ENCODE measurements at regions of chr16 and their contacts with region 1.

Region 1: GRCh38 chr16:78761427-78761826 is 662.0 kb downstream of the WWOX start:
- DNase-seq: no peak
- H3K4me3 ChIP-seq: no peak overlapping the region
- H3K27ac ChIP-seq: no peak overlapping the region
- H3K4me1 ChIP-seq: peaks cover 0 to 8% (median 4%) of the 10 kb centered on the region in 4 donors
- H3K27me3 ChIP-seq: no peaks in the 10 kb centered on the region
- CTCF ChIP-seq: no peak

Region 2: DNA sequence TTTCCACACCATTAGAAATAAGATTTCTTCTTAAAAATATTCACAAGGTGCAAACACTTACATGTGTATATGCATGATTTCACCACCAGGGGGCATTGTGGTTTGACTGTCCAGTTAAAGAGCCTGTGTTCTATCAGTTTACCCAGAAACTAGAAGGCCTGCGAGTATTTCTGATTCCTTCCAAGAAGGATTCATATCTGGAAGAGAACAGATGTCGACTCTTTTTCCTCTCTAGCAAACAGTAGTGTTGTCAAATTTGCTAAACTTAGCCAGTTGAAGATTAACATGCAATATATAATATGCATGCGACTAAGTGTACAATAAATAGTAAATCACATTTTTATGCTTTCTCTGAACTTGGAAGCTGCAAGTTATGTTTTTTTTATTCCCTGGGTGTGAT is 257.8 kb before region 1 on chr16:
- intact Hi-C with region 1: loop called (anchors 10 kb)
- DNase-seq: peak in 1 of 2 donors; percentile 41
- H3K4me3 ChIP-seq: no peak overlapping the region
- H3K27ac ChIP-seq: no peak overlapping the region
- H3K4me1 ChIP-seq: peaks cover 0 to 28% (median 18%) of the 10 kb centered on the region in 4 donors
- H3K27me3 ChIP-seq: no peaks in the 10 kb centered on the region
- CTCF ChIP-seq: peak; percentile 70 to 89